K562 (cell line): ENCODE measurements at regions of chr4 and their contacts with region 1.

Region 1: DNA sequence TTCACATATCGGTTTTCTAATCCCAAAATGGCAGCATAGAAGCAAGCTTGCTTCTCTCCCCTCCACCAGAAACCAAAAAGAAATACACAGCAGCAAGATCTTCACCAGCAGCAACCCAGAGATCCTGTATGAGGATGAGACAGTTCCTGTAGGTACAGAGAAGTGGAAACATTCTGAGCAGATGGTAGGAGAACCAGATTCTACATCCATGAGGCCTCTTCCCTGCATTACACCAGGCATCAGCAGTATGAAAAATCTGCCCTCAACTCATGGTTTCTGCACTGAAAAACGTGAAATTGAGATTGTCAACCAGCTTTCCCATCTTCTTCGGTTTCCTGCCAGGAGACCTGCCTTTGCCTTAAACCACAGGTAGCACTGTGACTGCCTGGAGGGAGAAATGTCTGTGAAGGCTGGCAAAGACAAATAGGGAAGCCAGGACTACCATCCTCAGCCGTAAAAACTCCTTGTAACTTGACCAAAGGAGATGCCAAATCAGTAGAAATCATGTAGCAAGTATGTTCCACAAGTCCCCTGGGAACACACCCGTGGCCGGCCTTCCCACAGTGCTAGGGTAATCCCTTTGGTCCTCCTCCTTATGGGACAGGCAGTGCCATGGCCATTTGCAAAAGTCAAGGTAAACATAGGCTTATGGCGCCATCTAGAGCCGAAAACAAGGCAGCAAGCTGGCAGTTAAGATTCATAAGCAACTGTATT is 24.0 kb upstream of the MTHFD2L start:
- DNase-seq: peak; percentile 56 to 89 (median 61)
- ATAC-seq: peak; percentile 99
- H3K4me3 ChIP-seq: no peak overlapping the region
- H3K27ac ChIP-seq: no peak overlapping the region
- H3K4me1 ChIP-seq: peaks cover 0 to 7% of the 10 kb centered on the region in 2 experiments; a peak in 2 of 5 replicates
- H3K27me3 ChIP-seq: no peaks in the 10 kb centered on the region
- CTCF ChIP-seq: peak; percentile 80 to 93 (median 85)
- EP300 ChIP-seq: no peak
- POLR2A ChIP-seq: no peak
- RAD21 ChIP-seq: peak; percentile 92 to 93

Region 2: DNA sequence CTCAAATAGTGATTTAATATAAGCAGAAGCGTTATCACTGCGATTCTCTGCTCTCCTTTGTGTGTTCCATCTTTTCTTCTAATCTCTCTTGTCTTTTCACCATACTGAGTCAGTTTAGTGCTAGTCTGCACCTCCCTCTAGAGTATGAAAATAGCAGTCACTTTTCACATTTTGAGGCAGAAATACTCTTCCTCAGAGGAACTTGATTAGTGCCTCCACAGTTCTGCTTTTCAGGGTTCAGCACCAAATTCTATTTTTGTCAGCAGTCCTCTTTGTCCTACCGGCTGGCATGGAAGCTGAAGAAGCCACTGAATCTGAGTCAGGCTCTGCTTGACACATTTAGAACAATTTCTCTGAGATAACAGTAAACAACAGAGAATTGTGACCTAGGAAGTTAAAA is 825.7 kb before region 1 on chr4:
- CTCF ChIA-PET with region 1: interaction called, 4 read pairs
- POLR2A ChIA-PET with region 1: no interaction called
- in situ Hi-C with region 1: loop called (anchors 25 kb)
- intact Hi-C with region 1: no loop called
- DNase-seq: peak in 1 of 4 experiments; percentile 35
- ATAC-seq: peak; percentile 78
- H3K4me3 ChIP-seq: no peak overlapping the region
- H3K27ac ChIP-seq: no peak overlapping the region
- H3K4me1 ChIP-seq: no peaks in the 10 kb centered on the region
- H3K27me3 ChIP-seq: no peaks in the 10 kb centered on the region
- CTCF ChIP-seq: peak; percentile 44 to 56 (median 49); a peak in 5 of 6 replicates
- EP300 ChIP-seq: no peak
- POLR2A ChIP-seq: no peak
- RAD21 ChIP-seq: peak; percentile 31 to 63; a peak in 3 of 4 replicates

Region 3: GRCh38 chr4:73573794-73574406 is 560.0 kb before region 1 on chr4:
- CTCF ChIA-PET with region 1: no interaction called
- POLR2A ChIA-PET with region 1: no interaction called
- in situ Hi-C with region 1: no loop called
- intact Hi-C with region 1: loop called (anchors 2 kb)
- DNase-seq: peak; percentile 16 to 84 (median 33)
- ATAC-seq: peak; percentile 92
- H3K4me3 ChIP-seq: no peak overlapping the region
- H3K27ac ChIP-seq: no peak overlapping the region
- H3K4me1 ChIP-seq: no peaks in the 10 kb centered on the region
- H3K27me3 ChIP-seq: no peaks in the 10 kb centered on the region
- CTCF ChIP-seq: peak; percentile 87 to 88 (median 87)
- EP300 ChIP-seq: no peak
- POLR2A ChIP-seq: no peak
- RAD21 ChIP-seq: peak; percentile 73 to 85

Region 4: DNA sequence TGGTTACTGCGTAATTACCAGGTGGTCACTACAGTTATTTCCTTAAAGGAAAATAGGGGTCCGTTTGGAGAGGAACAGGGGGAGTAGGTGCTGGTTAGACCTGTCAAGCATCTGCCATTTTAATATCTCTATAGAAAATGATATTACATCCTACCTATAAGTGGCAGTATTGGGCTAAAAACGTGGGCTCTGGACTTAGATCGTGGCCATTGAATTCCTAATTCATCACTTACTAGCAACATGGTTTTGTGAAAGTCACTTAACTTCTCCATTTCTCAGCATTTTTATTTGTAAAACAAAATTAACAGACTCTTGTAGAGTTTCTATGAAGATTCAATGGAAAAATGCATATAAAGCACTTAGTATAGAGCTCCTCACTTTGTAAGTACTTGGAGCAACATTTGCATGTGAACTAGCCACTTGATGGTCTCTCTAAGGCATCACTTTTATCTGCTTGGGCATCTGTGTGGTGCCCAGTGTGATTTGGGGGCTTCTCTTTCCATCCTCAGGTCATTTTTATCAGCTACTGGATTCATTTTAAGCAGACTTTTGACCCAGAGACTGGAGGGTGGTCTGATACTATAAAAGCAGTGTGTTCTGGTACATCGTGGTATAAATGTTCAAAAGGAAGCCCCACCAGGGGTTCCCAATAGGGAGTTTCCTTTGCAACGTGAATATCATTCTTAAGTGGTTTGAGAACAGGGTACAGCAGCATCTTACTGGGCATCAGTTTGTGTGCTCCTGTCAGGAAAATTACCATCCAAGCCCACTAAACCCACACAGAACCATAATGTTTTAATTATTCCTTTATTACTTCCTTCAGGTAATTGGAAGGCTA is 471.0 kb before region 1 on chr4:
- CTCF ChIA-PET with region 1: interaction called, 15 read pairs
- POLR2A ChIA-PET with region 1: no interaction called
- in situ Hi-C with region 1: loop called (anchors 5 kb)
- intact Hi-C with region 1: loop called (anchors 1 kb)
- DNase-seq: peak in 3 of 4 experiments; percentile 19 to 58 (median 51)
- ATAC-seq: peak; percentile 89
- H3K4me3 ChIP-seq: no peak overlapping the region
- H3K27ac ChIP-seq: no peak overlapping the region
- H3K4me1 ChIP-seq: no peaks in the 10 kb centered on the region; a peak in 1 of 5 replicates
- H3K27me3 ChIP-seq: no peaks in the 10 kb centered on the region
- CTCF ChIP-seq: peak; percentile 48 to 81 (median 61); a peak in 5 of 6 replicates
- EP300 ChIP-seq: no peak
- POLR2A ChIP-seq: no peak
- RAD21 ChIP-seq: peak; percentile 87 to 89

Region 5: DNA sequence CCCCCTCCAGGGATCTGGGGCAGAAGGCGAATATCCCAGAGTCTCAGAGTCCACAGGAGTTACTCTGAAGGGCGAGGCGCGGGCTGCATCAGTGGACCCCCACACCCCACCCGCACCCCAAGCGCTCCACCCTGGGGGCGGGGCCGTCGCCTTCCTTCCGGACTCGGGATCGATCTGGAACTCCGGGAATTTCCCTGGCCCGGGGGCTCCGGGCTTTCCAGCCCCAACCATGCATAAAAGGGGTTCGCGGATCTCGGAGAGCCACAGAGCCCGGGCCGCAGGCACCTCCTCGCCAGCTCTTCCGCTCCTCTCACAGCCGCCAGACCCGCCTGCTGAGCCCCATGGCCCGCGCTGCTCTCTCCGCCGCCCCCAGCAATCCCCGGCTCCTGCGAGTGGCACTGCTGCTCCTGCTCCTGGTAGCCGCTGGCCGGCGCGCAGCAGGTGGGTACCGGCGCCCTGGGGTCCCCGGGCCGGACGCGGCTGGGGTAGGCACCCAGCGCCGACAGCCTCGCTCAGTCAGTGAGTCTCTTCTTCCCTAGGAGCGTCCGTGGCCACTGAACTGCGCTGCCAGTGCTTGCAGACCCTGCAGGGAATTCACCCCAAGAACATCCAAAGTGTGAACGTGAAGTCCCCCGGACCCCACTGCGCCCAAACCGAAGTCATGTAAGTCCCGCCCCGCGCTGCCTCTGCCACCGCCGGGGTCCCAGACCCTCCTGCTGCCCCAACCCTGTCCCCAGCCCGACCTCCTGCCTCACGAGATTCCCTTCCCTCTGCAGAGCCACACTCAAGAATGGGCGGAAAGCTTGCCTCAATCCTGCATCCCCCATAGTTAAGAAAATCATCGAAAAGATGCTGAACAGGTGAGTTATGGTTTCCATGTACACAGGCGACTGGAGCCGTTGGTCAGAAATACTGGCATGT is 264.6 kb before region 1 on chr4 and contains the start of gene CXCL1:
- CTCF ChIA-PET with region 1: interaction called, 3 read pairs
- POLR2A ChIA-PET with region 1: no interaction called
- in situ Hi-C with region 1: loop called (anchors 10 kb)
- intact Hi-C with region 1: loop called (anchors 1 kb)
- DNase-seq: peak; percentile 37 to 68 (median 51)
- ATAC-seq: peak; percentile 95
- H3K4me3 ChIP-seq: peak within 1 kb of the TSS; percentile 54
- H3K27ac ChIP-seq: no peak within 1 kb of the TSS
- H3K4me1 ChIP-seq: peaks cover 9 to 11% of the 10 kb centered on the region in 2 experiments; a peak in 4 of 5 replicates
- H3K27me3 ChIP-seq: no peaks in the 10 kb centered on the region
- CTCF ChIP-seq: peak in 2 of 3 experiments; percentile 49 to 69; a peak in 4 of 6 replicates
- EP300 ChIP-seq: no peak
- POLR2A ChIP-seq: no peak
- RAD21 ChIP-seq: peak in 1 of 2 experiments; percentile 32
- polyA plus RNA-seq, gene CXCL1: 0.07 TPM in 1 of 2 experiments, not detected in the other

Region 6: DNA sequence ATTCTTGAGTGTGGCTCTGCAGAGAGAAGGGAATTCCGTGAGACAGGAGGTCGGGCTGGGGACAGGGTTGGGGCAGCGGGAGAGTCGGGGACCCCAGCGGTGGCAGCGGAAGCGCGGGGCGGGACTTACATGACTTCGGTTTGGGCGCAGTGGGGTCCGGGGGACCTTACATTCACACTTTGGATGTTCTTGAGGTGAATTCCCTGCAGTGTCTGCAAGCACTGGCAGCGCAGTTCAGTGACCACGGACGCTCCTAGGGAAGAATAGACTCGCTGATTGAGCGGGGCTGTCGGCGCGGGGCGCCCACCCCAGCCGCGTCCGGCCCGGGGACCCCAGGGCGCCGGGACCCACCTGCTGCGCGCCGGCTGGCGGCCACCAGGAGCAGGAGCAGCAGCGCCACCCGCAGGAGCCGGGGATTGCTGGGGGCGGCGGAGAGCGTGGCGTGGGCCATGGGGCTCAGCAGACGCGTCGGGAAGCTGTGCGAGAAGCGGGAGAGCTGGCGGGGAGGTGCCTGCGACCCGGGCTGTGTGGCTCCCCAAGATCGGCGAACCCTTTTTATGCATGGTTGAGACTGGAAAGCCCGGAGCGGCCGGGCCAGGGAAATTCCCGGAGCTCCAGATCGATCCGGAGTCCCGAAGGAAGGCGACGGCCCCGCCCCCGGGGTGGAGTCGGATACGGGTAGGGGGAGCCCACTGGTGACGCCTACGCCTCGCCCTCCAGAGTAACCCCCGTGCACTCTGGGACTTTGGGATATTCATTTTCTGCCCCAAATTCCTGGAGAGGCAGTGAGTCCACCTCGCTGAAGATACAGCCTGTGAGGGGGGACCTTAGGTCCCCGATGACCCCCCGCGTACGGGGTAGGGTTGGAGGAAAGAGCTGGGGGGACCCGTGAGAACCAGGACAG is 95.5 kb before region 1 on chr4 and contains the start of gene CXCL3:
- CTCF ChIA-PET with region 1: no interaction called
- POLR2A ChIA-PET with region 1: no interaction called
- in situ Hi-C with region 1: no loop called
- intact Hi-C with region 1: loop called (anchors 1 kb)
- DNase-seq: peak; percentile 82 to 88 (median 84)
- ATAC-seq: peak; percentile 89
- H3K4me3 ChIP-seq: peak within 1 kb of the TSS; percentile 55
- H3K27ac ChIP-seq: peak within 1 kb of the TSS; percentile 88
- H3K4me1 ChIP-seq: peaks cover 3 to 16% of the 10 kb centered on the region in 2 experiments; a peak in 3 of 5 replicates
- H3K27me3 ChIP-seq: no peaks in the 10 kb centered on the region
- CTCF ChIP-seq: peak; percentile 17 to 65 (median 53)
- EP300 ChIP-seq: no peak
- POLR2A ChIP-seq: peak; percentile 84
- RAD21 ChIP-seq: peak; percentile 64 to 68
- polyA plus RNA-seq, gene CXCL3: 2.3 to 5.0 TPM

Region 7: GRCh38 chr4:74098450-74098994 is 35.4 kb before region 1 on chr4:
- CTCF ChIA-PET with region 1: no interaction called
- POLR2A ChIA-PET with region 1: interaction called, 5 read pairs
- in situ Hi-C with region 1: no loop called
- intact Hi-C with region 1: loop called (anchors 1 kb)
- DNase-seq: peak in 1 of 4 experiments; percentile 37
- ATAC-seq: no peak
- H3K4me3 ChIP-seq: peak overlapping the region; percentile 75
- H3K27ac ChIP-seq: peak overlapping the region; percentile 93
- H3K4me1 ChIP-seq: peaks cover 17 to 39% of the 10 kb centered on the region in 2 experiments; a peak in 4 of 5 replicates
- H3K27me3 ChIP-seq: no peaks in the 10 kb centered on the region
- CTCF ChIP-seq: no peak
- EP300 ChIP-seq: no peak
- POLR2A ChIP-seq: no peak
- RAD21 ChIP-seq: no peak

Region 8: GRCh38 chr4:74161666-74162450 is 27.9 kb after region 1 on chr4:
- CTCF ChIA-PET with region 1: no interaction called
- POLR2A ChIA-PET with region 1: no interaction called
- in situ Hi-C with region 1: no loop called
- intact Hi-C with region 1: no loop called
- DNase-seq: no peak
- ATAC-seq: no peak
- H3K4me3 ChIP-seq: no peak overlapping the region
- H3K27ac ChIP-seq: no peak overlapping the region
- H3K4me1 ChIP-seq: peaks cover 0 to 4% of the 10 kb centered on the region in 2 experiments; a peak in 3 of 5 replicates
- H3K27me3 ChIP-seq: no peaks in the 10 kb centered on the region
- CTCF ChIP-seq: no peak
- EP300 ChIP-seq: no peak
- POLR2A ChIP-seq: no peak
- RAD21 ChIP-seq: no peak